Dorsolateral prefrontal cortex (tissue), 120 donors: ENCODE measurements at regions of chr1 and their contacts with region 1.

Region 1: GRCh38 chr1:66981679-66982078 is 56.9 kb downstream of the MIER1 start:
- DNase-seq: peak in 5 of 10 donors; percentile 10 to 68 (median 47)
- H3K4me3 ChIP-seq: peak overlapping the region in 58 of 59 donors; percentile 0 to 67 (median 49)
- H3K27ac ChIP-seq: peak overlapping the region in 55 of 59 donors; percentile 27 to 88 (median 74)
- H3K27me3 ChIP-seq: no peaks in the 10 kb centered on the region
- CTCF ChIP-seq: peak in 33 of 56 donors; percentile 9 to 66 (median 33)

Region 2: GRCh38 chr1:66929999-66930822 is 51.5 kb before region 1 on chr1:
- intact Hi-C with region 1: loop called (anchors 2 to 10 kb)
- DNase-seq: peak; percentile 87 to 96 (median 93)
- H3K4me3 ChIP-seq: peak overlapping the region; percentile 63 to 93 (median 83)
- H3K27ac ChIP-seq: peak overlapping the region; percentile 77 to 97 (median 93)
- H3K27me3 ChIP-seq: no peaks in the 10 kb centered on the region
- CTCF ChIP-seq: peak in 52 of 56 donors; percentile 10 to 77 (median 53)